ENCODE measurements at regions of chr16 and their contacts with region 1.

Region 1: DNA sequence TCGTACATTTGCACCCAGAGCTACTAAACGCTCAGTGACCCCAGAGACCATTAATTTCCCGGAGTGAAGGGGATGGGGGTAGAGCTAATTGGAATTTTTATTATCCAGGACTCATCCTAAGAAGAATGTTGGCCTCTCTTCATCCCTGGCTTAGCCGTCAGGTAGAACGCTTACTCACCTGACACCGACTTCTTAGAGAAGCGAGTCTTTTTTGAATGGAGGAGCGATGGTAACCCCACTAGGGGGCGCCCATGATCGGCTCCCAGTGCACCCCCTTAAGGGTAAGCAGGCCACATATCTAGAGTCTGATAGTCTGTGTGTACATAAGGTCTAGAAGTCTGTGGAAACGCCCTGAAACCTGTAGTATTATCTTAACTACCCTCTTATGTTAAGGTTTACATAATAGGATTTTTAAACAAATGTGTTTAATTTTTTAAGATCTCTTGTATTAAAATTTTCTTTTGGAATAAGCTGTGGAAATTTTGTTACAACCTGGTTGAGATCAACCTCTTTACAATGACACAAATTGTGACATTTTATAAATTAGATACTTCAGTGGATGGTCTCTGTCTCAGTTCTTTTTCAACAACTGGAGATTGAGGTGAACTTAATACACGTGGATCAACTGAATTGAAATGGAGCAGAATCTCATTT is 229.8 kb downstream of the CPPED1 start:
- DNase-seq: peak; percentile 19 to 62
- ATAC-seq: peak in 1 of 3 donors; percentile 66
- H3K4me3 ChIP-seq: no peak overlapping the region
- H3K4me3 Mint-ChIP-seq: peak overlapping the region; percentile 4
- H3K27ac ChIP-seq: no peak overlapping the region
- H3K27ac Mint-ChIP-seq: no peak overlapping the region
- H3K4me1 ChIP-seq: peaks cover 11% of the 10 kb centered on the region
- H3K4me1 Mint-ChIP-seq: peaks cover 5 to 15% of the 10 kb centered on the region in 2 donors
- H3K27me3 ChIP-seq: no peaks in the 10 kb centered on the region
- H3K27me3 Mint-ChIP-seq: peaks cover 0 to 4% of the 10 kb centered on the region in 2 donors
- CTCF ChIP-seq: peak; percentile 33

Region 2: DNA sequence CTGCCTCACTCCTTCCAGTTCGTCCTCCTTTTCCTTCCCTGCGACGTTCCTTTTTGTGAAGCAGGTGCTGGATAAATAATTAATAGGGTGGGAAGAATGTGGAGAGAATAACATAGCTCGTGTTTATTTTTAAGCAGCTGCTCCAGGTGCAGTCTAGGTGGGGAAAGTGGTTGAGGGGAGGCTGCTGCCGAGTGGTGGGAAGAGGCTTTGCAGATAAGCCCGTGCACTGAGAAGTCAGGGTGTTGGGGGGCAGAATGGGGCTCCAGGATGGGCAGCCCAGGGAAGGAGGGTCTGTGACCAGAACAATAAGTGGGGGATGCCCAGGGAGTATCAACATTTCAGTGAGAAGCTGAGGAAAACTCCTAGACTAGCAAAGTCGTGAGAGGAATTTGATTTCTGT is 70.7 kb before region 1 on chr16:
- intact Hi-C with region 1: no loop called
- DNase-seq: no peak
- ATAC-seq: no peak
- H3K4me3 ChIP-seq: no peak overlapping the region
- H3K4me3 Mint-ChIP-seq: no peak overlapping the region
- H3K27ac ChIP-seq: no peak overlapping the region
- H3K27ac Mint-ChIP-seq: no peak overlapping the region
- H3K4me1 ChIP-seq: no peaks in the 10 kb centered on the region
- H3K4me1 Mint-ChIP-seq: peaks cover 17 to 21% of the 10 kb centered on the region in 2 donors
- H3K27me3 ChIP-seq: no peaks in the 10 kb centered on the region
- H3K27me3 Mint-ChIP-seq: no peaks in the 10 kb centered on the region
- CTCF ChIP-seq: no peak

Region 3: GRCh38 chr16:12620150-12620549 is 46.3 kb after region 1 on chr16:
- intact Hi-C with region 1: loop called (anchors 5 kb)
- DNase-seq: no peak
- ATAC-seq: no peak
- H3K4me3 ChIP-seq: no peak overlapping the region
- H3K4me3 Mint-ChIP-seq: no peak overlapping the region
- H3K27ac ChIP-seq: no peak overlapping the region
- H3K27ac Mint-ChIP-seq: no peak overlapping the region
- H3K4me1 ChIP-seq: no peaks in the 10 kb centered on the region
- H3K4me1 Mint-ChIP-seq: peaks cover 0 to 11% of the 10 kb centered on the region in 2 donors
- H3K27me3 ChIP-seq: no peaks in the 10 kb centered on the region
- H3K27me3 Mint-ChIP-seq: peaks cover 3 to 11% of the 10 kb centered on the region in 2 donors
- CTCF ChIP-seq: no peak

Measured in natural killer cell (primary cell).